K562 (cell line): ENCODE measurements at regions of chr1 and their contacts with region 1.

Region 1: DNA sequence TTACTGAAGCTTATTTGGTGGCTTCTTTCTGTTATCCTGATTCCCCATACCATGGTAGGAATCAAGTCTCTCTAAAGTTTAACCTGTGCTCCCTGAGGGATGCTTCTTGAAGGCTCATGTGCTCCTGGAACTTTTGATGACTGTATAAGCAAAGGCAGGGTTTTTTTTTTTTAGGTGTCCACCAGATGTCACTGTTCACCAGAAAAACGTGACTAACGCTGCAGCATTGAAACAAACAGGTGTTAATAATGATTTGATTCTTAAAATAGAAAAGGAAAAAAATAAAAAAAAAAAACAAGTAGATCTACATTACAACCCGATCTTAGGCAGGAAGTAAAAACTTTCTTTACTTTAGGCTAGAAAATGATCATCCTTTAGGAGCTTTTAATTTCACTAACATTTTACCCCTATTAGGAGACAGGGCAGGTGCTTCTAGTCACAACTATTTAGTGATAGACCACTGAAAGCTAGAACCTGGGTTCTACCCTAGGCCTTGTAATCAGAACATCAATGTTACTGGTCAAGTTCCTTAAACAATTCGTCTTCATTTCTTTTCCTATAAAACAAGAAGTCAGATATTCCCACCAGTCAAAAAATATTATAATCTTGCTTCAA is 223.0 kb downstream of the PLA2G4A start:
- DNase-seq: peak; percentile 37 to 63 (median 44)
- ATAC-seq: peak; percentile 85
- H3K4me3 ChIP-seq: no peak overlapping the region
- H3K27ac ChIP-seq: no peak overlapping the region
- H3K4me1 ChIP-seq: no peaks in the 10 kb centered on the region
- H3K27me3 ChIP-seq: no peaks in the 10 kb centered on the region
- CTCF ChIP-seq: peak; percentile 35 to 62 (median 48); a peak in 4 of 6 replicates
- EP300 ChIP-seq: no peak
- POLR2A ChIP-seq: no peak
- RAD21 ChIP-seq: peak; percentile 63 to 75

Region 2: DNA sequence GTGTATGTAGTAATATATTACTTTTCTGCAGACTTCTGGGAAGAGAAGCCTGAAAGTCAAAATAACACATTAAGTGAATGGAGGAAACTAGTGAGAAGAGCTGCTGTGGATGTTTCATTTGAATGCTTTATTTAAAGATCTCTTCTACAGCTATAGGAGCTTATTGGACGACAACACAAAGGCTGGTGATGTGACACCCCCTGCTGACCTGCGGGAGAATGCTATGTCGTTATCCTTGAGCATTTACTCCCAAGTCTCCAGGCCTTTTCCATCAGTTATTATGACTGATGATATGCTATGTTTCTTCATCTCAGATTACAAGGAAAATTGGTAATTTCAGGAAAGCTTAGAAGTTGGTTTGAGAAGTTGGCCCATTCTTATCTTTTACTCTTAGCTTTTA is 245.2 kb before region 1 on chr1:
- CTCF ChIA-PET with region 1: no interaction called
- POLR2A ChIA-PET with region 1: no interaction called
- in situ Hi-C with region 1: no loop called
- intact Hi-C with region 1: no loop called
- DNase-seq: no peak
- ATAC-seq: no peak
- H3K4me3 ChIP-seq: no peak overlapping the region
- H3K27ac ChIP-seq: no peak overlapping the region
- H3K4me1 ChIP-seq: no peaks in the 10 kb centered on the region
- H3K27me3 ChIP-seq: no peaks in the 10 kb centered on the region
- CTCF ChIP-seq: no peak; a peak in 1 of 6 replicates
- EP300 ChIP-seq: no peak
- POLR2A ChIP-seq: no peak
- RAD21 ChIP-seq: peak in 1 of 2 experiments; percentile 33; a peak in 2 of 4 replicates

Region 3: DNA sequence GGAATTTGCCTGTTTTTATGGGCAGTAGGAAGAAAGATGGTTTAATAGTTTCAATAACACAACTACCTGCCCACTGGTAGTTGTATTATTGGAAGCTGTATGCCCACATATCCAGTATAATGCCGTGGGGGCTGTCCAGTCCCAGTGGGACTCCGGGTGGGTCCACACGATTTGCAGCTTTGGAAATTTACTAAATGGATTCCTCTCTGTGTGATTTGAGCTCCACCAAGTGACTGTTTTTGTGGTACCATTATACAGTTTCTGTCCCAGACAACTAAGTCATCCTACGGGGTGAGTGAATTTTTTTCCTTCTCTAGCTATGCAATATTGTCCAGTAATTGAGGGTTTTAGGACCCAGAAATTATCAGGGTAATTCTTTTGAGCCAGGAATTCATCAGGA is 136.2 kb before region 1 on chr1:
- CTCF ChIA-PET with region 1: no interaction called
- POLR2A ChIA-PET with region 1: no interaction called
- in situ Hi-C with region 1: no loop called
- intact Hi-C with region 1: loop called (anchors 10 kb)
- DNase-seq: no peak
- ATAC-seq: no peak
- H3K4me3 ChIP-seq: no peak overlapping the region
- H3K27ac ChIP-seq: no peak overlapping the region
- H3K4me1 ChIP-seq: no peaks in the 10 kb centered on the region
- H3K27me3 ChIP-seq: no peaks in the 10 kb centered on the region
- CTCF ChIP-seq: no peak
- EP300 ChIP-seq: no peak
- POLR2A ChIP-seq: no peak
- RAD21 ChIP-seq: no peak; a peak in 1 of 4 replicates

Region 4: GRCh38 chr1:187153047-187153446 is 101.3 kb after region 1 on chr1:
- CTCF ChIA-PET with region 1: no interaction called
- POLR2A ChIA-PET with region 1: no interaction called
- in situ Hi-C with region 1: no loop called
- intact Hi-C with region 1: no loop called
- DNase-seq: no peak
- ATAC-seq: no peak
- H3K4me3 ChIP-seq: no peak overlapping the region
- H3K27ac ChIP-seq: no peak overlapping the region
- H3K4me1 ChIP-seq: no peaks in the 10 kb centered on the region
- H3K27me3 ChIP-seq: no peaks in the 10 kb centered on the region
- CTCF ChIP-seq: no peak
- EP300 ChIP-seq: no peak
- POLR2A ChIP-seq: no peak
- RAD21 ChIP-seq: no peak